CD8-positive, alpha-beta T cell (primary cell): ENCODE measurements at regions of chr20 and their contacts with region 1.

Region 1: GRCh38 chr20:53869466-53870258 is 200.7 kb downstream of the BCAS1 start:
- DNase-seq: peak; percentile 43 to 90 (median 74)
- ATAC-seq: peak; percentile 67
- H3K4me3 ChIP-seq: no peak overlapping the region
- H3K4me3 Mint-ChIP-seq: peak overlapping the region; percentile 33
- H3K27ac ChIP-seq: peak overlapping the region in 1 of 2 experiments; percentile 52
- H3K27ac Mint-ChIP-seq: peak overlapping the region; percentile 93
- H3K4me1 ChIP-seq: peaks cover 82% of the 10 kb centered on the region
- H3K4me1 Mint-ChIP-seq: peaks cover 75% of the 10 kb centered on the region
- H3K27me3 ChIP-seq: no peaks in the 10 kb centered on the region
- H3K27me3 Mint-ChIP-seq: no peaks in the 10 kb centered on the region
- CTCF ChIP-seq: peak; percentile 84

Region 2: GRCh38 chr20:53594068-53595017 is 275.3 kb before region 1 on chr20:
- CTCF ChIA-PET with region 1: interaction called, 8 read pairs
- POLR2A ChIA-PET with region 1: interaction called, 11 read pairs
- intact Hi-C with region 1: no loop called
- DNase-seq: peak; percentile 94 to 100 (median 98)
- ATAC-seq: peak; percentile 74
- H3K4me3 ChIP-seq: peak overlapping the region; percentile 67 to 83
- H3K4me3 Mint-ChIP-seq: peak overlapping the region; percentile 82
- H3K27ac ChIP-seq: peak overlapping the region; percentile 84 to 87
- H3K27ac Mint-ChIP-seq: peak overlapping the region; percentile 92
- H3K4me1 ChIP-seq: peaks cover 42% of the 10 kb centered on the region
- H3K4me1 Mint-ChIP-seq: peaks cover 59% of the 10 kb centered on the region
- H3K27me3 ChIP-seq: no peaks in the 10 kb centered on the region
- H3K27me3 Mint-ChIP-seq: no peaks in the 10 kb centered on the region
- CTCF ChIP-seq: no peak

Region 3: GRCh38 chr20:53708129-53708968 is 161.3 kb before region 1 on chr20:
- CTCF ChIA-PET with region 1: interaction called, 3 read pairs
- POLR2A ChIA-PET with region 1: interaction called, 8 read pairs
- intact Hi-C with region 1: loop called in 1 of 2 experiments (anchors 5 kb)
- DNase-seq: peak in 4 of 9 experiments; percentile 13 to 58 (median 25)
- ATAC-seq: peak; percentile 48
- H3K4me3 ChIP-seq: no peak overlapping the region
- H3K4me3 Mint-ChIP-seq: peak overlapping the region; percentile 48
- H3K27ac ChIP-seq: peak overlapping the region; percentile 29 to 44
- H3K27ac Mint-ChIP-seq: peak overlapping the region; percentile 93
- H3K4me1 ChIP-seq: peaks cover 58% of the 10 kb centered on the region
- H3K4me1 Mint-ChIP-seq: peaks cover 55% of the 10 kb centered on the region
- H3K27me3 ChIP-seq: no peaks in the 10 kb centered on the region
- H3K27me3 Mint-ChIP-seq: no peaks in the 10 kb centered on the region
- CTCF ChIP-seq: no peak

Region 4: GRCh38 chr20:53828682-53829254 is 40.9 kb before region 1 on chr20:
- CTCF ChIA-PET with region 1: interaction called, 4 read pairs
- POLR2A ChIA-PET with region 1: interaction called, 6 read pairs
- intact Hi-C with region 1: loop called in 1 of 2 experiments (anchors 5 kb)
- DNase-seq: peak in 2 of 9 experiments; percentile 27 to 51
- ATAC-seq: peak; percentile 23
- H3K4me3 ChIP-seq: peak overlapping the region; percentile 28 to 33
- H3K4me3 Mint-ChIP-seq: peak overlapping the region; percentile 86
- H3K27ac ChIP-seq: peak overlapping the region; percentile 47 to 88
- H3K27ac Mint-ChIP-seq: peak overlapping the region; percentile 97
- H3K4me1 ChIP-seq: peaks cover 34% of the 10 kb centered on the region
- H3K4me1 Mint-ChIP-seq: peaks cover 57% of the 10 kb centered on the region
- H3K27me3 ChIP-seq: no peaks in the 10 kb centered on the region
- H3K27me3 Mint-ChIP-seq: no peaks in the 10 kb centered on the region
- CTCF ChIP-seq: no peak

Region 5: DNA sequence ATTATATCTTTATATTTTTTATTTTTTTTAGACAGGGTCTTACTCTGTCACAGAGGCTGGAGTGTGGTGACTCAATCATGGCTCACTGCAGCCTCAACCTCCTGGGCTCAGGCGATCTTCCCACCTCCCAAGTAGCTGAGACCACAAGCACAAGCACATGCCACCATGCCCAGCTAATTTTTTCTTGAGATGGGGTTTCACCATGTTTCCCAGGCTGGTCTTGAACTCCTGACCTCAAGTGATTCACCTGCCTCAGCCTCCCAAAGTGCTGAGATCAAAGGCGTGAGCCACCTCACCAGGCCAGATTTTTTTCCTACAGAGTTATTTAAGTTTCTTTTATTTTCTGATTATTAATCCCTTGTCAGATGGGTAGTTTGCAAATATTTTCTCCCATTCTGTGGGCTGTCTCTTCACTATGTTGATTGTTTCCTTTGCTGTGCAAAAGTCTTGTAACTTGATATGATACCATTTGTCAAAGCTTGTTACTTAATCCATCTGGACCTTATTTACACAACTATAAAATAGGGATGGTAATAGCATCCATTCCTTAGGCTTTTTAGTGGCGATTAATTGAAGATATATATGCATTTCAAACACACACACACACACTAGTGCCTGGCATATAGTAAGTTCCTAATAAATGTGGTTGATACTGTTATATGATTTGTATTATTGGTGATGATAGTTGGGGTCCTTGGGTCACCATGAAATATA is 13.6 kb after region 1 on chr20:
- CTCF ChIA-PET with region 1: interaction called, 9 read pairs
- POLR2A ChIA-PET with region 1: interaction called, 38 read pairs
- intact Hi-C with region 1: loop called in 1 of 2 experiments (anchors 1 kb)
- DNase-seq: no peak
- ATAC-seq: no peak
- H3K4me3 ChIP-seq: no peak overlapping the region
- H3K4me3 Mint-ChIP-seq: no peak overlapping the region
- H3K27ac ChIP-seq: no peak overlapping the region
- H3K27ac Mint-ChIP-seq: peak overlapping the region; percentile 99
- H3K4me1 ChIP-seq: peaks cover 56% of the 10 kb centered on the region
- H3K4me1 Mint-ChIP-seq: peaks cover 60% of the 10 kb centered on the region
- H3K27me3 ChIP-seq: no peaks in the 10 kb centered on the region
- H3K27me3 Mint-ChIP-seq: no peaks in the 10 kb centered on the region
- CTCF ChIP-seq: no peak

Region 6: GRCh38 chr20:53949319-53949889 is 79.7 kb after region 1 on chr20:
- CTCF ChIA-PET with region 1: interaction called, 4 read pairs
- POLR2A ChIA-PET with region 1: no interaction called
- intact Hi-C with region 1: loop called in 1 of 2 experiments (anchors 2 kb)
- DNase-seq: peak; percentile 55 to 94 (median 80)
- ATAC-seq: peak; percentile 88
- H3K4me3 ChIP-seq: peak overlapping the region; percentile 4 to 10
- H3K4me3 Mint-ChIP-seq: peak overlapping the region; percentile 76
- H3K27ac ChIP-seq: peak overlapping the region; percentile 68 to 70
- H3K27ac Mint-ChIP-seq: peak overlapping the region; percentile 98
- H3K4me1 ChIP-seq: peaks cover 26% of the 10 kb centered on the region
- H3K4me1 Mint-ChIP-seq: peaks cover 36% of the 10 kb centered on the region
- H3K27me3 ChIP-seq: no peaks in the 10 kb centered on the region
- H3K27me3 Mint-ChIP-seq: no peaks in the 10 kb centered on the region
- CTCF ChIP-seq: no peak

Region 7: DNA sequence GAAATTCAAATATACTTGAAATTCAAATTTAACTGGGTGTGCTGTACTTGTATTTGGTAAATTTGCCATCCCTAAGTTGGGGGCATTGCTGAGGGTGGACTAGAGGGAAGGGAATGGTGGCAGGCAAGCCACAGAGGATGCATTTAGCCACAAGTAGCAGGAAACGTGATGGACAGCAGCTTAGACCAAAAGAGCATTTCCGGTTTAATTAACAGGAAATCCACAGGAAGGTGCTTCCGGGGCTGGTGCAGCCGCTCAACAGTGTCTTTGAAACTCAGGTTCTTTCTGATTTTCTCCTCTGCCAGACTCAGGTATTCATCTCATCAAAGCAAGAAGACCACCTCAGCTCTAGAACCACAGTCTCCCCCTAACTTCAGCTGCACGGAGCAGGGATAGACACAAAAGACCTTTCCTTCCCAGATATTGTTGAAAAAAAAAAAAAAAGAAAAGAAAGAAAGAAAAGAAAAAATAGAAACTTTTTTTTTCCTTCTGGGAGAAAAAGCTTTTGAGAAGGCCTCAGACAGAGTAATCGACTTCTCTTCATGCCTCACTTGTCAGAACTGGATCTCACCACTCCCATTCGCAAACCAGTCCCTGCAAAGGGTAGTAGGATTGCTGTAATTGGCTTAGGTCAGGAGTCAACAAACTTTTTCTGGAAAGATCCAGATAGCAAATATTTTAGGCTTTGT is 208.8 kb after region 1 on chr20:
- CTCF ChIA-PET with region 1: no interaction called
- POLR2A ChIA-PET with region 1: no interaction called
- intact Hi-C with region 1: no loop called
- DNase-seq: peak in 6 of 9 experiments; percentile 14 to 60 (median 36)
- ATAC-seq: no peak
- H3K4me3 ChIP-seq: peak overlapping the region in 1 of 2 experiments; percentile 0
- H3K4me3 Mint-ChIP-seq: peak overlapping the region; percentile 49
- H3K27ac ChIP-seq: peak overlapping the region in 1 of 2 experiments; percentile 38
- H3K27ac Mint-ChIP-seq: peak overlapping the region; percentile 87
- H3K4me1 ChIP-seq: peaks cover 26% of the 10 kb centered on the region
- H3K4me1 Mint-ChIP-seq: peaks cover 39% of the 10 kb centered on the region
- H3K27me3 ChIP-seq: no peaks in the 10 kb centered on the region
- H3K27me3 Mint-ChIP-seq: no peaks in the 10 kb centered on the region
- CTCF ChIP-seq: no peak